ENCODE measurements at regions of chr11 and their contacts with region 1.

Region 1: GRCh38 chr11:33742249-33742851 is 6.1 kb upstream of the CD59 start:
- DNase-seq: no peak
- H3K4me3 ChIP-seq: no peak overlapping the region
- CTCF ChIP-seq: no peak
- POLR2A ChIP-seq: no peak

Region 2: DNA sequence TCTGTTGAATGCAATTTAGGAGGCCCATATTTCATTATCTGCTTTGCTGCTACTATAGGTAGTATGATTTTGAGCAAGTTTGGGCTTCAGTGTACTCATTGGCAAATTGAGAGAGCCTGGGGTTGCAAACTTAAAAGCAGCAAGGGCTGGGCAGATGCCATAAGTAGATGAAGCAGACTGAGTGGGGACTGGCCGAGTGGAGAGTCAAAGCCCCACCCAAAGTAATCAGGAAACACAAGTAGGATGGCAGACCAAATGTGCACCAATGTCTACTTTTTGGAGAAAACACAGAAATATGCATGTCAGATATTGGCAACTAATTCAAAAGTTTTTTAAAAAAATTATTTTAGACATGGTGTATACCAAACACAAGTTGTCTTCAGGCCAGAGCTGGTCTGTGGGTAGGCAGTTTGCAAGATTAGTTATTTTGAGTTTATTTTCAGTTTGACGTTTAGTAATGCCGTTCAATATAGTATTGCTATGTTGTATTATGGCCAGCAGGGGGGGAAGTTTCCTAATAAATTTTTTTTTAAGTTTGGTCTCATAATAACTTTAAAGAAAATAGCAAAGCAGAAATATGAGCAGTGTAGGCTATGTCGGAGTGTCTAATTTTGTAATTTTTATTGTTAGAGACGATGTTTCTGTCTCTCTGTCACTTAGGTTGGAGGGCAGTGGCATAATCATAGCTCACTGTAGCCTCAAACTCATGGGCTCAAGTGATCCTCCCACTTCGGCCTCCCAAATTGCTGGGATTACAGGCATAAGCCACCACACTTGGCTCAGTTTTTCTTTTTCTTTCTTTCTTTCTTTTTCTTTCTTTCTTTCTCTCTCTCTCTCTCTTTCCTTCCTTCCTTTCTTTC is 380.1 kb before region 1 on chr11:
- intact Hi-C with region 1: loop called (anchors 10 kb)
- DNase-seq: no peak
- H3K4me3 ChIP-seq: no peak overlapping the region
- CTCF ChIP-seq: no peak
- POLR2A ChIP-seq: no peak

Region 3: GRCh38 chr11:33542921-33543320 is 199.4 kb before region 1 on chr11:
- intact Hi-C with region 1: loop called (anchors 10 kb)
- DNase-seq: no peak
- H3K4me3 ChIP-seq: no peak overlapping the region
- CTCF ChIP-seq: no peak
- POLR2A ChIP-seq: no peak